Heart left ventricle (tissue), 16 donors: ENCODE measurements at regions of chr1 and their contacts with region 1.

Region 1: GRCh38 chr1:36109041-36109679 is 15.9 kb downstream of the COL8A2 start:
- DNase-seq: no peak
- ATAC-seq: no peak
- H3K4me3 ChIP-seq: no peak overlapping the region
- H3K27ac ChIP-seq: no peak overlapping the region
- H3K4me1 ChIP-seq: no peaks in the 10 kb centered on the region
- H3K27me3 ChIP-seq: no peaks in the 10 kb centered on the region
- CTCF ChIP-seq: no peak
- POLR2A ChIP-seq: no peak

Region 2: DNA sequence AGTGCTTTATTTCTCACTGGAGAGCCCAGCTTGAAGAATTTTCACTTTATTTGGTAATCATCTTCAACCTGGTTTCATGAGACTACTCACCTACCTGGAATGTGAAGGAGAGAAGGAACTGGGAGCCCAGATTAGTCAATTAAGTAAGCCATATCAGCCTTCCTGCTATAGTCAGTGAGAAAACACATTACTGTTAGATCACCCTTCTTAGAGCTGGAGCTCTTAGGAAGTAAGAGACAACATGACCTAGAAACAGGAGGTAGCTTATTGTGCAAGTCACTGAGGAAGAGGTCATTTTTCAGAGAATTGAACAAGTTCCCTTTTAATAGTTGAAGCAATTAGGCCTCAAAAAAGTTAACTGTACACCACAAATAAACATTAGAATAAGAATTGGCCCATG is 74.5 kb before region 1 on chr1:
- intact Hi-C with region 1: no loop called
- DNase-seq: no peak
- ATAC-seq: peak in 1 of 4 donors; percentile 63
- H3K4me3 ChIP-seq: no peak overlapping the region
- H3K27ac ChIP-seq: peak overlapping the region in 1 of 12 donors; percentile 83
- H3K4me1 ChIP-seq: peaks cover 0 to 17% (median 0%) of the 10 kb centered on the region in 12 donors
- H3K27me3 ChIP-seq: no peaks in the 10 kb centered on the region
- CTCF ChIP-seq: no peak
- POLR2A ChIP-seq: no peak

Region 3: GRCh38 chr1:36062321-36062720 is 46.8 kb before region 1 on chr1:
- intact Hi-C with region 1: no loop called
- DNase-seq: no peak
- ATAC-seq: no peak
- H3K4me3 ChIP-seq: no peak overlapping the region
- H3K27ac ChIP-seq: no peak overlapping the region
- H3K4me1 ChIP-seq: no peaks in the 10 kb centered on the region
- H3K27me3 ChIP-seq: no peaks in the 10 kb centered on the region
- CTCF ChIP-seq: no peak
- POLR2A ChIP-seq: no peak

Region 4: DNA sequence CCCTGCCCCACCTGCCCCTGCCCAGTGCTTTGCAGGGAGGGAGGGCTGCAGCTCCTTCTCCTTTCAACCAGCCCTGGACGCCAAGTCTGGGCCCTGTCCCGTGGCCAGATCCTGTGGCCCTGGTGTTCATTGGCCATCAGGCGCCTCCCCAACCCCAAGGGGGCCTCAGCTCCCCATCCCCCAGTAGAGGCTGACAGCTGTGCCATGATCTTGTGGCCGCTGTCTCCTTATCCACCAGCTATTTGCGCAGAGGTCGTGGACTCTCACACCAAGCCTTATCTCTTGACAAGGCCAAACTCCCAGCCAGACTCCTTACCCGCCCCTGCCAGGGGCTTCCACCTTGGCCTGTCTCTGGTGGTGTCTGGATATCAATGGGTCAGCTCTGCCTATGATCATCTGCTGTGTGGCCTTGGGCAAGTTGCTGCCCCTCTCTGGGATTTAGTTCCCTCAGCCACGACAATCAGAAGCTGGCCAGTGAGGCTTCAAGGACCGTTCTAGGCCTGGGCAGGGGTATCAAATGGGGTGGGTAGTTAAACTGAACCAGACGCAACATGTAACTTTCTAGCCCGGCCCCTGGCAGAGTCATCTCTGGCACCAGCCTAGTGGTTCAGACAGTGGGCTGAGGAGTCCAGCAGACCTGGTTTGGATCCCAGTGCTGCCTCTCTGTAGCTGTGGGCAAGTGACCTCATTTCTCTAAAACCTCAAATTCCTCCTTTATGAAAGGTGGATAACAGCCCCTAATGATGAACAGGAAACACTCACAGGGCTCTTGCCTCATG is 19.2 kb after region 1 on chr1:
- intact Hi-C with region 1: loop called in 1 of 10 experiments (anchors 2 kb)
- DNase-seq: no peak
- ATAC-seq: no peak
- H3K4me3 ChIP-seq: no peak overlapping the region
- H3K27ac ChIP-seq: no peak overlapping the region
- H3K4me1 ChIP-seq: peaks cover 0 to 22% (median 0%) of the 10 kb centered on the region in 12 donors
- H3K27me3 ChIP-seq: peaks cover 0 to 18% (median 0%) of the 10 kb centered on the region in 9 donors
- CTCF ChIP-seq: no peak
- POLR2A ChIP-seq: no peak